ENCODE measurements at regions of chr6 and their contacts with region 1.

Region 1: GRCh38 chr6:2999618-3000557 is at the start of gene NQO2:
- DNase-seq: peak; percentile 90
- H3K4me3 Mint-ChIP-seq: peak within 1 kb of the TSS; percentile 80
- H3K27ac Mint-ChIP-seq: peak within 1 kb of the TSS; percentile 37
- H3K4me1 Mint-ChIP-seq: peaks cover 12% of the 10 kb centered on the region
- H3K27me3 Mint-ChIP-seq: no peaks in the 10 kb centered on the region
- CTCF ChIP-seq: no peak
- total RNA-seq, gene NQO2: 18.6 and 20.0 TPM in 2 replicates

Region 2: DNA sequence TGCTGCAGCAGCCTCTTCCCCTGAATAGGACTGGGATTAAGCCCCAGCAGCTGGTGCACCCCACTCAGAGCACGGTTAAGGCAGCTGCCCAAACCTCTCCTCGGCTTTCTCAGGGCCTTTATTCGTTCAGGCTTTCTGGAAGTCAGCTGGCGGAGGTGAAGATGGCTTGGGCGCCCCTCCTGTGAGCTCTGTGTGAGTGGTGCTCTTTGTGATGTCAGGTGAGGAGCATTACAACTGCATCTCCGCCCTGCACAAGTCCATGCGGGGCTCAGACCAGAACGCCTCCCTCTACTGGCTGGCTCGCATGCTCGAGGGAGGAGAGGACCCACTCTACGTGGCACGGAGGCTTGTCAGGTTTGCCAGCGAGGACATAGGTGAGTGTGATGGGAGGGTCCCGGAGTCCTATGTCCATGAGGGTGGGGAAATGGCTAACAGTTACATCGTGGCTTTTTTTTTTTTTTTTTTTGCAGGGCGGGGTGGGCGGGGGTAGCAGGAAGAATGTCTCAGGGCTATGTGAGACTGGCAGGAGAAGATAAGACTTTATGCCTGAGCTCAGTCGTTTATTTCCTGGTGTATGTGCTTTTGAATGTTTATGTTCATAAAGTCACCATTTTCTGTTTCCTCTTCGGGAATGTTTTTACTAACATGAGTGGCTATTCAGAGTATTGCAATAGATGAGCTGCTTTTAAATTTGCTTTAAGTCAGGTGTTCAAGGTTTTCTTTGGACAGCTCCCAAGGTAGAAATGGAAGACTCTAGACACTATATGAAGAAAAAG is 216.5 kb before region 1 on chr6:
- CTCF ChIA-PET with region 1: no interaction called
- POLR2A ChIA-PET with region 1: no interaction called
- intact Hi-C with region 1: no loop called
- DNase-seq: no peak
- H3K4me3 Mint-ChIP-seq: no peak overlapping the region
- H3K27ac Mint-ChIP-seq: no peak overlapping the region
- H3K4me1 Mint-ChIP-seq: no peaks in the 10 kb centered on the region
- H3K27me3 Mint-ChIP-seq: no peaks in the 10 kb centered on the region
- CTCF ChIP-seq: no peak

Region 3: DNA sequence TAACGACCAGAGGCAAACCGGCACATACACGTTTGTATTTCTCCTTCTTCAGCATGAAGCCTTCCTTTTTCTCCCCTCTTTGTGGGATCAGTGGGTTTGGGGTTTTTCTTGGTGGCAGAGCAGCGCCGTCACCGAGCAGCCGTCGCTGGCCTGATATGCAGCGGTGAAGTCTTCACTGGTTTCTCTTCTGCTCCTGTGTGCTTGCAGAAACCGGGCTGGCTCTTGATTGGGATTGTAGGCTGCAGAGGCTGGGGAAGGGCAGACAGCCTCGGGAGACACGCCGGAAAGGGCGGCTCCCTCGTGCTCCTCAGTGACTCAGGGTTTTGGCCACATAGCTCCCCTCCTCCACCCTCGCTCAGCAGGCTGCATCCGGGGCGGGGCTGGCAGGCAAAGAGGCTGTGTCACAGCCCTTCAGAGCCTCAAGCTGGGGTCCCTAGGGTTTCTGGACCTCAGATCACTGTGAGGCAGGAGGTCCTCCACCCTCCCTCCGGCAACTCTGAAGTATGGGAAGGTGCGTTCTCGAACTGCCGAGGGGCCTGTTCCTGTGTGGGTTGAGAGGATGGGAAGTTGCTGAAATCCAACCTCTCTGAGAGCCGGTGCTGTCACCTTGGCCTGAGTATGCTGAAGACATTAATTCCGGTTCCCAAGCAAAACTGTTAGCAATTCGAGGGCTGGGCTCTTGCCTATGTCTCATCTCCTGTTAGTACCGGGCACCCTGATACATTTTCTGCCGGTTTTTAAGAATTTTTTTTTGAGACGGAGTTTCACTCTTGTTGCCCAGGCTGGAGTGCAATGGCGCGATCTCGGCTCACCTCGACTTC is 24.0 kb after region 1 on chr6:
- CTCF ChIA-PET with region 1: interaction called, 7 read pairs
- POLR2A ChIA-PET with region 1: interaction called, 37 read pairs
- intact Hi-C with region 1: loop called (anchors 2 kb)
- DNase-seq: peak; percentile 93
- H3K4me3 Mint-ChIP-seq: peak overlapping the region; percentile 74
- H3K27ac Mint-ChIP-seq: peak overlapping the region; percentile 96
- H3K4me1 Mint-ChIP-seq: peaks cover 16% of the 10 kb centered on the region
- H3K27me3 Mint-ChIP-seq: no peaks in the 10 kb centered on the region
- CTCF ChIP-seq: no peak

Region 4: DNA sequence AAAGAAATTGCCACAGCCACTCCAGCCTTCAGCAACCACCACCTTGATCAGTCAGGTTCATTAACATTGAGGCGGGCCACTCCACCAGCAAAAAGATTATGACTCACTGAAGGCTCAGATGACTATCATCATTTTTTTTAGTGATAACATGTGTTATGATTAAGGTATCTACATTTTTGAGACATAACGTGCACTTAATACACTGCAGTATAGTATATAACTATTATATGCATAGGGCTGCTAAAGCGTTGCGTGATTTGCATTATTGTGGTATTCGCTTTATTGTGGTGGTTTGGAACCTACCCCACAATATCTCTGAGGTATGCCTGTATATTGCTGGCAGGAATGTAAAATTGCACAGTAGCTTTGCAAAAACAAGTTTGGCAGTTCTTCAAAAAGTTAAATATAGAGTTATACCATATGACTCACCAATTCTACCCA is 61.6 kb after region 1 on chr6:
- CTCF ChIA-PET with region 1: interaction called, 34 read pairs
- POLR2A ChIA-PET with region 1: interaction called, 14 read pairs
- intact Hi-C with region 1: loop called (anchors 2 kb)
- DNase-seq: peak; percentile 82
- H3K4me3 Mint-ChIP-seq: no peak overlapping the region
- H3K27ac Mint-ChIP-seq: no peak overlapping the region
- H3K4me1 Mint-ChIP-seq: peaks cover 5% of the 10 kb centered on the region
- H3K27me3 Mint-ChIP-seq: peaks cover 12% of the 10 kb centered on the region
- CTCF ChIP-seq: peak; percentile 23

Region 5: GRCh38 chr6:3118353-3119039 is 118.6 kb after region 1 on chr6 and contains the start of gene BPHL:
- CTCF ChIA-PET with region 1: no interaction called
- POLR2A ChIA-PET with region 1: interaction called, 3 read pairs
- intact Hi-C with region 1: loop called (anchors 2 kb)
- DNase-seq: peak; percentile 92
- H3K4me3 Mint-ChIP-seq: peak within 1 kb of the TSS; percentile 80
- H3K27ac Mint-ChIP-seq: peak within 1 kb of the TSS; percentile 98
- H3K4me1 Mint-ChIP-seq: peaks cover 14% of the 10 kb centered on the region
- H3K27me3 Mint-ChIP-seq: no peaks in the 10 kb centered on the region
- CTCF ChIP-seq: no peak
- total RNA-seq, gene BPHL: 13.2 and 17.5 TPM in 2 replicates

Region 6: DNA sequence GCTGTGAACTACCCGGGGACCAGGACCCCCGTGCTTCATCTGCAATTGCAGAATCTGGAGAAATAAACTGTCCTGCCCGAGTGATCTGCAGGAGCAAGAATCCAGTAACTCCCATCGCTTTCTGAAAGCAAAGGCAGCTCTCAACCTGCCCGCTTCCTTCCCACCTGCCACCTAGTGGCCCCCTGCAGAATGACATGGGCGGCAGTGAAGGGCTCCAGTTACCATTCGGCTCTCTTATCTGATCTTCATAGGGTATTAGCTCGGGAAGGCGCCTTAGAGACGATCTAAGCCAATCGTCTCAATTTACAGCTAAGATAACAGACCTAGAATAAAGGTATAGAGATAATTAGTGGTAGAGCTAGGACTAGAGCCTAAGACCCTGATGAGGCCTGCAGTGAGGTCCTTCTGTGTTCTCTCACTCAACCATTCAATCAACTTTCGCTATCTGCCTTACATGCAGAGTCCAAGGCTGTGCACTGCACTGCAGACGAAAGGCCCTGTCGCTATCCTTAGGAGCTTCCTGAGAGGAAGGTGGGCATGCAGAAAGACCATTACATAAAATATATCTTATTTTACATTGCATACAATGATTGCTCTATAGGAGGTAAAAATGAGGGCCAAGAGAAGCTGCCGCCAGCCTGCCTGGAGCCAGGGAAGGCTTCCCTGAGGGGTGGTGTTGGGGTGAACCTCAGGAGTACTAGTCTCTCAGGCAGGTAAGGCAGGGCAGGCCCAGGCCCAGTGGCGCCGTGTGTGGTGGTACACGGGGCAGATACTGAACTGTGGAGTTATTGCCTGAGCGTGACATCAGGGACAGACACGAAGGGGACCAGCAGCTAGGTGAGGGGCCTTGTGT is 251.8 kb after region 1 on chr6:
- CTCF ChIA-PET with region 1: interaction called, 3 read pairs
- POLR2A ChIA-PET with region 1: interaction called, 4 read pairs
- intact Hi-C with region 1: loop called (anchors 2 kb)
- DNase-seq: peak; percentile 84
- H3K4me3 Mint-ChIP-seq: peak overlapping the region; percentile 43
- H3K27ac Mint-ChIP-seq: peak overlapping the region; percentile 54
- H3K4me1 Mint-ChIP-seq: peaks cover 24% of the 10 kb centered on the region
- H3K27me3 Mint-ChIP-seq: no peaks in the 10 kb centered on the region
- CTCF ChIP-seq: peak; percentile 84

Region 7: GRCh38 chr6:3943331-3943765 is 943.5 kb after region 1 on chr6:
- CTCF ChIA-PET with region 1: no interaction called
- POLR2A ChIA-PET with region 1: no interaction called
- intact Hi-C with region 1: no loop called
- DNase-seq: no peak
- H3K4me3 Mint-ChIP-seq: no peak overlapping the region
- H3K27ac Mint-ChIP-seq: no peak overlapping the region
- H3K4me1 Mint-ChIP-seq: no peaks in the 10 kb centered on the region
- H3K27me3 Mint-ChIP-seq: no peaks in the 10 kb centered on the region
- CTCF ChIP-seq: no peak

Measured in MCF 10A (cell line).